ENCODE measurements at regions of chr1 and their contacts with region 1.

Region 1: GRCh38 chr1:221203224-221204054 is 324.2 kb downstream of the HLX start:
- DNase-seq: peak; percentile 62
- H3K4me3 ChIP-seq: no peak overlapping the region; a peak in 1 of 4 replicates
- H3K27ac ChIP-seq: peak overlapping the region in 1 of 2 experiments; percentile 55; a peak in 2 of 4 replicates
- H3K4me1 ChIP-seq: no peaks in the 10 kb centered on the region; a peak in 1 of 4 replicates
- H3K27me3 ChIP-seq: no peaks in the 10 kb centered on the region
- CTCF ChIP-seq: peak; percentile 89
- EP300 ChIP-seq: no peak
- RAD21 ChIP-seq: peak; percentile 93

Region 2: DNA sequence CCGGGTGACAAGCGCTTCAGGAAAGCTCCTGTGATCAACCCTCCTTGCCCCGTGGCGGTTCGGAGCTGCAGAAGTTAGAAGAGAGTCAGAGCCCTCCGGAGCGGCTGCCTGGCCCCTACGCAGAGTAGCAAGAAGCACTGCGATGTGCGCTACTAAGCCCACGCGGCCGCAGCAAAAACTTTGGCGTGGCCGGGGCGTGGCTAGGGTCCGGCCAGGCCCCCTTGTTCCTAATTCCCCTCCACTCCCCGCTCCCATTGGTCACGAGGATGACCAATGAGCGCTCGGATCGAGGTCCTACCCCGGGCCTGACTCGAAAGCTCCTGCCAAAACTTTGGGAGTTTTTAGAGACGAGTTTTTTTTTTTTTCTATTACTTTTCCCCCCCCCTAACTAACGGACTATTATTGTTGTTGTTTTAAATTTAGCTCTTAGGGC is 324.3 kb before region 1 on chr1 and contains the start of gene HLX:
- CTCF ChIA-PET with region 1: interaction called, 88 read pairs
- POLR2A ChIA-PET with region 1: no interaction called
- DNase-seq: peak; percentile 97
- H3K4me3 ChIP-seq: peak within 1 kb of the TSS; percentile 83 to 92
- H3K27ac ChIP-seq: peak within 1 kb of the TSS; percentile 75 to 81
- H3K4me1 ChIP-seq: peaks cover 0 to 27% of the 10 kb centered on the region in 2 experiments; a peak in 2 of 4 replicates
- H3K27me3 ChIP-seq: no peaks in the 10 kb centered on the region
- CTCF ChIP-seq: no peak
- EP300 ChIP-seq: no peak
- RAD21 ChIP-seq: no peak
- polyA plus RNA-seq, gene HLX: 8.6 and 21.4 TPM in 2 replicates

Region 3: DNA sequence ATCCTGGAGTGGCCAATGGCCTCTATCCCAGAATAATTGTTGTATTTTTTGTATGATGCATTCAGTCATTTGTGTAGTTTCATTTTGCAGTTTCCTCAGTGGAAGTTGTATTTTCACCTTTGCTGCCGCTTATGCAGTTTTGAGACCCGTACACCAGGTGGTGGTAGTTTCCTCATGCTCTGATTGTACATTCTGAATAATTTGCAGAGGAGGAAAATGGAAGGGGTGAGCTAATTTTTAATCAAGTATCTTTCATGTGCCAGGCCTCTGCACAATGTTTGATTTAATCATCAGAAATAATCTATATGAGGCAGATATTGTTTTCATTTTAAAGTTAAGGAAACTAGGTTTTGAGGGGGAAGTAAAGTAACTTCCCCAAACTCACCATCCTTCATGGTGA is 294.7 kb before region 1 on chr1:
- CTCF ChIA-PET with region 1: interaction called, 63 read pairs
- POLR2A ChIA-PET with region 1: no interaction called
- DNase-seq: no peak
- H3K4me3 ChIP-seq: no peak overlapping the region; a peak in 1 of 4 replicates
- H3K27ac ChIP-seq: no peak overlapping the region
- H3K4me1 ChIP-seq: peaks cover 0 to 8% of the 10 kb centered on the region in 2 experiments; a peak in 1 of 4 replicates
- H3K27me3 ChIP-seq: no peaks in the 10 kb centered on the region
- CTCF ChIP-seq: peak; percentile 60
- EP300 ChIP-seq: no peak
- RAD21 ChIP-seq: peak; percentile 83

Region 4: GRCh38 chr1:221109930-221110329 is 93.5 kb before region 1 on chr1:
- CTCF ChIA-PET with region 1: no interaction called
- POLR2A ChIA-PET with region 1: no interaction called
- DNase-seq: no peak
- H3K4me3 ChIP-seq: no peak overlapping the region
- H3K27ac ChIP-seq: no peak overlapping the region
- H3K4me1 ChIP-seq: no peaks in the 10 kb centered on the region
- H3K27me3 ChIP-seq: no peaks in the 10 kb centered on the region
- CTCF ChIP-seq: no peak
- EP300 ChIP-seq: no peak
- RAD21 ChIP-seq: no peak

Region 5: DNA sequence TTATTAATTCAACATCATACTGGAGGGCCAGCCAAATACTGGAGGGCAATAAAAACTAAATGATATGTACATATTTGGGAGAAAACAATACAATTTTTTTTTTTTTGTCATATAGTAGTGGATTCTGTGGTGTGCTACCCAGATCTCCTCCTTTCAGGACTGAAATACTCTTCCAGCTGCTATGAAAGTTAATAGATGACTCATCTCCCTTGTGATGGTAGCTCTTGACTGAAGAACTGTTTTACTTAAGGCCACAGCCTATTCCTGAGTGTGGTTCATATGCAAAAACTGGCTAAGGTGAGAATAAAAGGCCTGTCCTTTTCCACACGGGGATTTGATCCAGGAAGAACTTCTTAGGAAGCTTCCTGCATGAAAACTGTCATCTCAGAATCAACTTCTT is 16.3 kb before region 1 on chr1:
- CTCF ChIA-PET with region 1: interaction called, 31 read pairs
- POLR2A ChIA-PET with region 1: no interaction called
- DNase-seq: no peak
- H3K4me3 ChIP-seq: no peak overlapping the region
- H3K27ac ChIP-seq: no peak overlapping the region
- H3K4me1 ChIP-seq: peaks cover 0 to 3% of the 10 kb centered on the region in 2 experiments; a peak in 1 of 4 replicates
- H3K27me3 ChIP-seq: no peaks in the 10 kb centered on the region
- CTCF ChIP-seq: no peak
- EP300 ChIP-seq: no peak
- RAD21 ChIP-seq: no peak

Region 6: DNA sequence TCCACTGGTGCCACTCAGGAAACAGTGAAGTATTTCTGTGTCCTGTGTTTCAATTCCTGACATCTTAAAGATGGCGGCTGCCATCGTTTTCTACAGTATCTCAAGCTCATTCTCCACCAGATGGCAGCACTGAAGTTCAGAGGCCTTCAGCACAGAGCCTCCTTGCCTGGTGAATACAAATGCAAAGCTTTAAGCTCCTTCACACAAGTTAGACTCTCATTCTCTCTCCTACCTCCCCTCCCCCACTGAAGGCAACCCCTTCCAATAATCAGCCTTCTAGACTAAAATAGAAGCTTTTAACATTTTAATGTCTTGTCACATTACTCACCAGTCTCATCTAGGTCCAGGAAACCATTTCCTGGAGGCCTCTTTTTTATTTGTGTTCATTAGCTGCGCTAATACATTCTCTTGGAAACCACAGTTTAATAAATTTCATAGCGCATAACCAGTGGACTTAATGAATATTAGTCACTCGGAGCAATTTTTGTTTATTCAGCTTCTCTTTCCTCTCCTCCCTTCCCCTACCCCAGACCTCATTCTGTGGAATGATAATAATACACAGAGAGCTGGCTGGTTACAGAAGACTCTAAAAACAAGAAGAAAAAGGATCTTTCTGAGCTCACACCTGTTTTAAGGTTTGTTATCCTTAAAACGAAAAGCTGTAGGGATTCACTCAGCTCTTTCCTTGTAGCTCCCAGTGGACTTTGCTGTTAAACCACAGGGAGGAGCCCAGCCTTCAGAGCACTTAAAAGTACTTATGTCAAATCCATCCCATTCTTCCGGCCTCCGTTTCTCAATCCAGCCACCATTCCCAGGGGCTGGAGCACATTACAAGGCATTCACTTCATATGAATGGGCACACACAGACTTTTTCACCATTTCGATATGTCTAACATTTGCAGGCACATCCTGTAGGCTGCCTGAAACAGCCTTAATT is 60.7 kb after region 1 on chr1:
- CTCF ChIA-PET with region 1: interaction called, 14 read pairs
- POLR2A ChIA-PET with region 1: no interaction called
- DNase-seq: peak; percentile 50
- H3K4me3 ChIP-seq: no peak overlapping the region
- H3K27ac ChIP-seq: peak overlapping the region; percentile 53 to 85; a peak in 3 of 4 replicates
- H3K4me1 ChIP-seq: peaks cover 0 to 4% of the 10 kb centered on the region in 2 experiments; a peak in 2 of 4 replicates
- H3K27me3 ChIP-seq: no peaks in the 10 kb centered on the region
- CTCF ChIP-seq: peak; percentile 83
- EP300 ChIP-seq: peak in 1 of 2 experiments; percentile 51; a peak in 2 of 4 replicates
- RAD21 ChIP-seq: peak; percentile 87

Region 7: DNA sequence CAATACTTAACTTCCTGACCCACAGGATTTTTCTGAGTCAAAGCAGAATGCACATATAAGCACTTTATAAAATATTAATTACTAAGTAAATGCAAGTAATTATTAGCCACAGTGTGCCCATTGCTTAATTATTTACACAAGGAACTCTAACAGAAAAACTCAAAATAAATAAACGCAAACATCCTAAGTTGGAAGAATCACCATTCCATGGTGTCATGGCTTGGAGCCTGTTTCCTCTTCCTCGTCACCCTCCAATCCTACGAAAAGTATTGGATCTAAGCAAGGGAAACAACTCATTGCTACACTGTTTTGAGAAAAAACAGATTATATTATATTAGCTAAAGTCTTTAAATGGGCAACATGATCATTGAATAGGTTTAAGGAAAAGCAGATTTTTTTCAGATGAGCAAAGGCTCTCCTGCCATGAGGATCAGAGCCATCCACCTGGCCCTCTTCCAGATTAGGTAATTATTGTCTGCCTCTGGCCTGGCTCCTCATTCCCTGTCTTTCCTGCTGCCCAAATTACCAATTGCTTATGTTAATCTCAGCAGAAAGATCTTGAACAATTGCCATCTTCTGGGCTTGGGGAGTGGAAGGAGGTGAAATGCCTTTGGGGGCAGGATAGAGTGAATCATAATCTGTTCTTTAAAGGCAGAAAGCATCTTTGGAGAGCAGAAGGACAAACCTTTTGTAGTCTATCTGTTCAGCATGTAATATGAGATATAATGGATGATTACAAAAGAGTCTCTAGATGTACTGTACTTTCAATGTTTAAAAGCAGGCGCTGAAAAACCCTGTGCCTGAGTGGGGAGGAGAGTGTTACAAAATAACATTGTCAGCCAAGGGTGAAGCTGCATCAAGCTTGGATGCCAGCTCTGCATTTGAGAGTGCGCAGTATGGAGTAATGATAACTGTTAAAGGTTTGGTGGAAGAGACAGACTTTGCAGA is 417.3 kb after region 1 on chr1:
- CTCF ChIA-PET with region 1: no interaction called
- POLR2A ChIA-PET with region 1: no interaction called
- DNase-seq: peak; percentile 27
- H3K4me3 ChIP-seq: no peak overlapping the region
- H3K27ac ChIP-seq: peak overlapping the region; percentile 29 to 85; a peak in 3 of 4 replicates
- H3K4me1 ChIP-seq: peaks cover 0 to 11% of the 10 kb centered on the region in 2 experiments; a peak in 3 of 4 replicates
- H3K27me3 ChIP-seq: no peaks in the 10 kb centered on the region
- CTCF ChIP-seq: no peak
- EP300 ChIP-seq: peak in 1 of 2 experiments; percentile 46; a peak in 1 of 4 replicates
- RAD21 ChIP-seq: peak; percentile 7; the same call in 1 of the 2 replicates

Measured in SK-N-SH (cell line).